PC-9 (cell line): ENCODE measurements at regions of chr5 and their contacts with region 1.

Region 1: DNA sequence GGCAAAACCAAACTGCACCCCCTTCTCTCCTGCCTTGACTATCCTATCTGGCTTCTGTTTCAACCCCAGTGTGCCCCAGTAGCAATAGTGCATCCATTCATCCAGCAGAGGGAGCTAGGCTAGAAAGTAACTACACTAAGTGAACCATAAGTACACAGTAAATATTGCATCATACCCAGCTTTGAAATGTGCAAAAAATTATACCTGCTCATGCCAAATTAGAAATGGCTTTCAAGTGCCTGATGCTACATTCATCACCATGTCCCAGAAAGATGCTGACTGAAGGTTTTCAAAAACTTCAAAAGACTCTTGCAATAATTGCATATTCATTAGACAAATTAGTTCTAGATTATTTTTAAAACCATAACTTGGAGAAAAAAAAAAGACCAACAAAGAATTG is 153.5 kb downstream of the PRELID2 start:
- DNase-seq: peak; percentile 50 to 77
- H3K4me3 ChIP-seq: no peak overlapping the region
- H3K27ac ChIP-seq: no peak overlapping the region
- H3K4me1 ChIP-seq: no peaks in the 10 kb centered on the region
- H3K27me3 ChIP-seq: no peaks in the 10 kb centered on the region
- CTCF ChIP-seq: peak; percentile 88

Region 2: DNA sequence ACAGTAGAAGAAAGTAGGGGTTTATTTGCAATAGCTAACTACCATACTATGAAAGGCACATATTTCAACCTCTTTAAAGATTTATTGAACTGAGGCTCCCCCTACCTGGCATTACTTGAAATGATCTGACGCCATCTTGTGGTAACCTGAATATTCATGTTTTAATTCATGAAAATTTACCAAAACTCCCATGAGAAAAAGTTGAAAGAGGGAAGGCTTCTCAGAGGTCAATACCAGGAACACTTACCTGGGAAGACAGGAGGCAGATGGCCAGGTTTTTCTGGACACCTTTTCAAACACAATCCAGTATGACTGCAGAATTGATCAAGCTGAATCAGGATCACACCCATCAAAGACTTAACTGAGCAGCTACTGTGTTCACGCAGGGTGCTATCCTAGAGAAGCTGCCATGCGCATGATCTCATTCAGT is 144.1 kb after region 1 on chr5:
- CTCF ChIA-PET with region 1: no interaction called
- POLR2A ChIA-PET with region 1: no interaction called
- intact Hi-C with region 1: loop called (anchors 2 kb)
- DNase-seq: peak in 1 of 2 experiments; percentile 40
- H3K4me3 ChIP-seq: no peak overlapping the region
- H3K27ac ChIP-seq: no peak overlapping the region
- H3K4me1 ChIP-seq: peaks cover 11% of the 10 kb centered on the region
- H3K27me3 ChIP-seq: no peaks in the 10 kb centered on the region
- CTCF ChIP-seq: peak; percentile 88

Region 3: DNA sequence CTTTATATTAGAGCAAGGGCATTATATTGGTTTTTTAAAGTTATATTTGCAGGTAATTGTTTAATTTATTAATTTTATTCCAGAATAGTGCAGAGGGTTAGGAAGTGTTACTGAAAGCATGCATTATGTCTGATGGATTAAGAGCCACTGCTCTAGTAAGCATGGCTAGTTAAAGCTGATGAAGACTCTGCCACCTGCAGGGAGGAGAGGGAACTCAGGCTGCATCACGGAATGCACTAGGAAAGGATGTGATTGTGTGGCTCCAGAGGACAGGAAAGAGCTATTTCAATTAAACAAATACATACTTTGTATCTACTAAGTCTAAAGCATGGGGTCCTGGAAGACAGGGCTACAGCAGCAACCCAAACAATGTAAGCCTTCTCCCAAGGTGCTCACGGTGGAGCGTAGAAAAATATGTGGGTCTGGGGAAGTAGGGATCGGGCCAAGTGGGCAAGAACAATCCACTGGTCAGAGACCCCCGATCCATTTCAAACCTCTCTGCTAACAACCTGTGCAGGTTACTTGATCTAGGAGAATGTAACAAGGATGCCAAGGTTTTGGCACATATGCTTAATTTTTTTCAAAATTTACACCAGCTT is 206.4 kb after region 1 on chr5:
- CTCF ChIA-PET with region 1: no interaction called
- POLR2A ChIA-PET with region 1: no interaction called
- intact Hi-C with region 1: loop called (anchors 10 kb)
- DNase-seq: peak; percentile 49 to 55
- H3K4me3 ChIP-seq: no peak overlapping the region
- H3K27ac ChIP-seq: no peak overlapping the region
- H3K4me1 ChIP-seq: no peaks in the 10 kb centered on the region
- H3K27me3 ChIP-seq: no peaks in the 10 kb centered on the region
- CTCF ChIP-seq: peak; percentile 80

Region 4: GRCh38 chr5:146426853-146427618 is 745.4 kb after region 1 on chr5:
- CTCF ChIA-PET with region 1: no interaction called
- POLR2A ChIA-PET with region 1: no interaction called
- intact Hi-C with region 1: loop called (anchors 5 kb)
- DNase-seq: peak in 1 of 2 experiments; percentile 39
- H3K4me3 ChIP-seq: no peak overlapping the region
- H3K27ac ChIP-seq: no peak overlapping the region
- H3K4me1 ChIP-seq: no peaks in the 10 kb centered on the region
- H3K27me3 ChIP-seq: no peaks in the 10 kb centered on the region
- CTCF ChIP-seq: peak; percentile 75